Sigmoid colon (tissue), 7 donors: ENCODE measurements at regions of chr2 and their contacts with region 1.

Region 1: DNA sequence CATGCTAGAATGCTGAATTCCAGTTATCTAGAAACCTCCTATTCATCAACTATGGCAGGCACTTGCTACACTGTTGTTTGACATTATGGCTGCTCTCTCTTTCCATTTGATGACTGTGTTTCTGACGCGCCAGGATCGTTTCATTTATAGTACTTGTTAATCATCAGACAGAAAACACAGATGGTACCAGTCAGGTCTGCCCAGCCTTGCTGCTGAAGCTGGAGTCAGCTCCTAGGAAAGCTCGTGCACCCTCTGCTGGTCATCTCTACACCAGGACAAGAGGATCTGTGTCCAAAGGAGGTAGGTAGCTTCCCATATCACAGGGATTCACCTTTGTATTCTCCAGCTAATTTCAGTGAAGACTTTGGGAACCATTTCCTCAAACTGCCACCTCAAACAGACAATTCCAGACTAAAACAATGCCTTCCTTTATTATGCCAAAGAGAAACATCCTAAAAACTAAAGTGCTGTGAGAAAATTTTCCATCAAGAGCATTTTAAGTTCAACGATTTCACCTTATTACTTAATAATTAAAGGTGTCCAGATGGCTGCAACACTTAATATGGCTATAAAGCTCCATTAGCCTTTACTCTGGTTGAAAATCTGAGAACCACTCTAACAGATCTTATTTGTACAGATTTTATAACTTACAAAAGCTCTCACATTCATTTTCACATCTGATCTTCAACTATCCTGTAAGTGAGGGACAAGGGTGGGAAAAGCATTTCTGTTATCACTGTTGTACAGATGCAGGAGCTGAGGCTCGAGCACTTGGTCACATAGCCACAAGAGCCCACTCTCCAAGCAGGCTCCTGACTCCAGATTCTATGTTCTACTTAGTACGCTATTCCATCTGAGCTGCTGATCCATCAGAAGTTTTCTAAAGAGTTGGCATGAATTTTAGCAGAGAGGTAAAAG is 17.5 kb downstream of the METTL8 start:
- DNase-seq: peak; percentile 94
- H3K4me3 ChIP-seq: no peak overlapping the region
- H3K27ac ChIP-seq: peak overlapping the region; percentile 62 to 77 (median 66)
- H3K4me1 ChIP-seq: peaks cover 0 to 29% (median 13%) of the 10 kb centered on the region in 4 donors
- H3K27me3 ChIP-seq: no peaks in the 10 kb centered on the region
- CTCF ChIP-seq: peak; percentile 76 to 81 (median 78)
- EP300 ChIP-seq: no peak
- POLR2A ChIP-seq: no peak

Region 2: DNA sequence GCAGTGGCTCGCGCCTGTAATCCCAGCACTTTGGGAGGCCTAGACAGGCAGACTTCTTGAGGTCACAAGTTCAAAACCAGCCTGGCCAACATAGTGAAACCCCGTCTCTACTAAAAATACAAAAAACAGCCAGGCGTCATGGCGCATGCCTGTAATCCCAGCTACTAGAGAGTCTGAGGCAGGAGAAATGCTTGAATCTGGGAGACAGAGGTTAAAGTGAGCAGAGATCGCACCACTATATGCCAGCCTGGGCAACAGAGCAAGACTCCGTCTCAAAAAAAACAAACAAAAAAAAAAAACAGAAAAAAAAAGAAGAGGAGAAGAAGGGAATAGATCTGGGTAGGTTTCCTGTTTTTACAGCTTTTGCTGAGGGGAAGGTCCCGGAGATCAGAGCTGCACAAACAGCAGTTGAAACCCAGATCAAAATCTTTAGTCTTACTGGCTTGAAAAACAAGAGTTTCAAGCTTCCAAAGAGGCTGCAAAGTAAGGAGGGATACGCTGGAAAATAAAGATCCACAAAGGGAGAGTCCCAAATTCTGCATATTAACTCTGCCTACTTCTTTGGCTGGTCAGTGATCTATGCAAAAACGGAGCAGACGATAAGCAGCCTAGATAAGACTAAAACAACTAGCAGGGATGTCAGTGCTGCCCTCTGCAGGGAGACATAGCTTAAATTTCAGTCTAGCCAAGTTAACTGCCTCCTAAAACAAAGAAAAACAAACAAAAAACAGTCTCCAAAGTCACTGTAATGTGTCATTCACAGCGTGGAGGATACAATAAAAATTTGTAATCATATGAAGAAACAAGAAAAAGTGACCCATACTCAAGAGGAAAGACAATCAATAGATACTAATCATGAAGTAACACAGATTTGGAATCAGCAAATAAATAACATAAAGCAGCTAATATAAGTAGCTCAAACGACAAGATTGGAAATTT is 329.6 kb before region 1 on chr2:
- intact Hi-C with region 1: no loop called
- DNase-seq: no peak
- H3K4me3 ChIP-seq: no peak overlapping the region
- H3K27ac ChIP-seq: no peak overlapping the region
- H3K4me1 ChIP-seq: peaks cover 0 to 25% (median 17%) of the 10 kb centered on the region in 4 donors
- H3K27me3 ChIP-seq: no peaks in the 10 kb centered on the region
- CTCF ChIP-seq: peak in 3 of 4 experiments; percentile 22 to 33 (median 22)
- EP300 ChIP-seq: no peak
- POLR2A ChIP-seq: no peak

Region 3: GRCh38 chr2:171271971-171272436 is 144.3 kb before region 1 on chr2:
- intact Hi-C with region 1: loop called (anchors 5 kb)
- DNase-seq: no peak
- H3K4me3 ChIP-seq: no peak overlapping the region
- H3K27ac ChIP-seq: peak overlapping the region; percentile 60 to 78 (median 68)
- H3K4me1 ChIP-seq: peaks cover 0 to 28% (median 22%) of the 10 kb centered on the region in 4 donors
- H3K27me3 ChIP-seq: no peaks in the 10 kb centered on the region
- CTCF ChIP-seq: no peak
- EP300 ChIP-seq: no peak
- POLR2A ChIP-seq: no peak